Heart left ventricle (tissue), 16 donors: ENCODE measurements at regions of chr22 and their contacts with region 1.

Region 1: GRCh38 chr22:17381237-17381914 is 12.1 kb downstream of the CECR2 start:
- DNase-seq: no peak
- ATAC-seq: no peak
- H3K4me3 ChIP-seq: no peak overlapping the region
- H3K27ac ChIP-seq: no peak overlapping the region
- H3K4me1 ChIP-seq: peaks cover 0 to 29% (median 7%) of the 10 kb centered on the region in 12 donors
- H3K27me3 ChIP-seq: no peaks in the 10 kb centered on the region
- CTCF ChIP-seq: no peak
- POLR2A ChIP-seq: no peak

Region 2: DNA sequence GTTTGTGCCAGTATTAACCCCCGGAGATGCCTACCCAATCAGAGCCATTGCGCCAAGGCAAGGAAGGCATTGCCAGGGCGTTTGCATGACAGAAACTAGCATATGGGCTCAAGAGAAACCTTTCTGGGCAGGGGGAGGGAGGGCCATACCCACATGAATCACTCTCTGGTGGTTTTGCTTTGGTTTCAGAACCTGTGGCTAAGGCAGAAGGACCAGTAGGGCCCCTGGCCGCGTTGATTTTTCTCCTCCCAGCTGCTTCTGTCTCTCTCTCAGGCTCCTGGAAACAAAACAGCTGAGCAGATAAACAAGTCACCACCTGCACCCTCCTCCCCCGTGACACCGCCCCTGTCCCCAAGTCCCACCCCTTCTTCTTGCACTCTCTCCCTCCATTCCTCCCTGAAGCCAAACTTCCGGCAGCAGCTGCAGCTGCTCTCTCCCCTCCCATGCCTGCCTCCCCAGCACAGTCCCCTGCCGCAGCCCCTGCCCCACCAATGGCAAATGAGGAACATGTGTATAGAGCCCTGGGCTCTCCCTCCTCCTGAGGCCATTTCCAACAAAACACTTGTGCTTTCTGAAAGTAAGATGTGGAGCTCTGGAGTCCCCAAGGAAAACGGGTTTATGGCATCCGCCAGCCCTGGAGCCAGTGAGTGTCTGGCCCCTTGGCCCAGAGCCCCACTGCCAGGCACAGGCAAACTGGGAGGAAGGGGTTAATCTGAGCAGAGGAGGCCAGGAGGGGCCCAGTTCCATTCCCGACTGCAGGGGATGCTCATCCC is 123.2 kb before region 1 on chr22:
- intact Hi-C with region 1: no loop called
- DNase-seq: peak in 4 of 5 donors; percentile 44 to 80 (median 67)
- ATAC-seq: peak; percentile 75 to 91 (median 81)
- H3K4me3 ChIP-seq: peak overlapping the region in 10 of 12 donors; percentile 9 to 45 (median 28)
- H3K27ac ChIP-seq: peak overlapping the region in 11 of 12 donors; percentile 10 to 79 (median 52)
- H3K4me1 ChIP-seq: peaks cover 0 to 17% (median 10%) of the 10 kb centered on the region in 12 donors
- H3K27me3 ChIP-seq: peaks cover 0 to 4% (median 0%) of the 10 kb centered on the region in 9 donors
- CTCF ChIP-seq: no peak
- POLR2A ChIP-seq: peak in 1 of 2 donors; percentile 33

Region 3: GRCh38 chr22:17348461-17349113 is 32.8 kb before region 1 on chr22:
- intact Hi-C with region 1: loop called in 1 of 10 experiments (anchors 2 kb)
- DNase-seq: no peak
- ATAC-seq: no peak
- H3K4me3 ChIP-seq: no peak overlapping the region
- H3K27ac ChIP-seq: no peak overlapping the region
- H3K4me1 ChIP-seq: no peaks in the 10 kb centered on the region
- H3K27me3 ChIP-seq: no peaks in the 10 kb centered on the region
- CTCF ChIP-seq: no peak
- POLR2A ChIP-seq: no peak

Region 4: GRCh38 chr22:17477391-17477833 is 96.0 kb after region 1 on chr22:
- intact Hi-C with region 1: loop called in 3 of 10 experiments (anchors 10 kb)
- DNase-seq: peak; percentile 24 to 71 (median 54)
- ATAC-seq: peak; percentile 57 to 93 (median 86)
- H3K4me3 ChIP-seq: peak overlapping the region in 10 of 12 donors; percentile 7 to 51 (median 34)
- H3K27ac ChIP-seq: peak overlapping the region in 8 of 12 donors; percentile 20 to 50 (median 39)
- H3K4me1 ChIP-seq: peaks cover 0 to 21% (median 7%) of the 10 kb centered on the region in 12 donors
- H3K27me3 ChIP-seq: no peaks in the 10 kb centered on the region
- CTCF ChIP-seq: no peak
- POLR2A ChIP-seq: no peak